ENCODE measurements at regions of chr1 and their contacts with region 1.

Region 1: DNA sequence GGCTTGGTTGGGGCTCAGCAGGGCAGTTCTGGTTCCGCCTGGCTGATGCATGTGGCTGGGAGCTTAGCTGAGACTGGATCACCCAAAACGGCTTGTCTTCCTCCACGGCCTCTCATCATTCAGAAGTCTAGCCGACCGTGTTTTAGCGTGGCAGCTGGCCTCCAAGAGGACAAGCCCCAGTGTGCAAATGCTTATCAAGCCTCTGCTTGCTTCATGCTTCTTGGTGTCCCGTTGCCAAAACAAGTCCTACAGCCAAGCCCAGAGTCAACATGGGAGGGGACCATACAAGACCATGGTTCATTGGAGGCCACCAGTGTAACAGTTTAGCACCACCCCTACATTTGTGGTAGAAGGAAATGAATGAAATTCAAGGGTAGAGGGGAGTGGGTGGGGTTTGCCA is 10.5 kb upstream of the KDF1 start:
- DNase-seq: peak in 1 of 2 experiments; percentile 44
- H3K4me3 ChIP-seq: no peak overlapping the region
- H3K27ac ChIP-seq: no peak overlapping the region
- H3K4me1 ChIP-seq: no peaks in the 10 kb centered on the region
- H3K27me3 ChIP-seq: no peaks in the 10 kb centered on the region
- CTCF ChIP-seq: no peak

Region 2: DNA sequence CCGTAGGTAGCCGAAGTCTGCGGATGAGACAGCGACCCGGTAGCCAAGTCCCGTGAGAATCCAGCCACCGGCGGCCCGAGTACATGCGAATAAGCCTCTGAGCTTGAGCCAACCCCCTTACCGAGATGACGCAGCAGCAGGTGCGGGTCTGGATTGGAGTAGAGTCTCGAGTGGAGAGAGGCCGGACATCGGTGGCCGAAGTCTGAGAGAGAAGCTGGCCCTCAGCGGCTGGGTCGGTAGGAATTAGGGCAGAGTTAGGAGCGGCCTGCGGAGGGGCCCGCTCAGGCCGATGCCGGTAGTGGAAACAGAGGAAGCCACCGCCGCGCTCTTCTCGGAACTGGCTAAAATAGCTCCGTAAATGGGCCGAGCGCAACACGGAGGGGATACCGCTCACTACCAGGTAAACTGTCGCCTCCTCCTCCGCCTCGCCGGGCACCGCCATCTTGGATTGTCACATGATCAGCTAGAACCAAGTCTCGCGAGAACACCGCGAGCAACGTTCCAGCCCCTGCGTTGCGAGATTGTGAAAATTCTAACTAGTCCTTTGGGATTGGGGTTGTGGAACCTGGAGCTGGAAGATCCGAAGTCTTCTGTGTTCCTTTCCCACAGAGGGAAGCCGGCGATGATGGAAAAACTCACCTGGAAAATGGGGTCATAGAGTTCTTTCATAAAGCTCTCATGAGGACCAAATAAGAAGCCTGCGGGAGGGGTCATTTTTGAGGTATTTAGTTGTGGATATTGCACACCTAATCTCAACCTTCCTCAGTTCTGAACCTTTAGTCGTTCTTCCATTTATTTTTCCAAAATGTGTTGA is 70.6 kb before region 1 on chr1 and contains the start of gene GPATCH3:
- CTCF ChIA-PET with region 1: no interaction called
- POLR2A ChIA-PET with region 1: no interaction called
- intact Hi-C with region 1: no loop called
- DNase-seq: peak; percentile 70 to 83
- H3K4me3 ChIP-seq: peak within 1 kb of the TSS; percentile 88
- H3K27ac ChIP-seq: peak within 1 kb of the TSS; percentile 81
- H3K4me1 ChIP-seq: peaks cover 15% of the 10 kb centered on the region; the same call in 1 of the 2 replicates
- H3K27me3 ChIP-seq: no peaks in the 10 kb centered on the region
- CTCF ChIP-seq: no peak
- total RNA-seq, gene GPATCH3: 13.1 and 16.7 TPM in 2 replicates

Region 3: DNA sequence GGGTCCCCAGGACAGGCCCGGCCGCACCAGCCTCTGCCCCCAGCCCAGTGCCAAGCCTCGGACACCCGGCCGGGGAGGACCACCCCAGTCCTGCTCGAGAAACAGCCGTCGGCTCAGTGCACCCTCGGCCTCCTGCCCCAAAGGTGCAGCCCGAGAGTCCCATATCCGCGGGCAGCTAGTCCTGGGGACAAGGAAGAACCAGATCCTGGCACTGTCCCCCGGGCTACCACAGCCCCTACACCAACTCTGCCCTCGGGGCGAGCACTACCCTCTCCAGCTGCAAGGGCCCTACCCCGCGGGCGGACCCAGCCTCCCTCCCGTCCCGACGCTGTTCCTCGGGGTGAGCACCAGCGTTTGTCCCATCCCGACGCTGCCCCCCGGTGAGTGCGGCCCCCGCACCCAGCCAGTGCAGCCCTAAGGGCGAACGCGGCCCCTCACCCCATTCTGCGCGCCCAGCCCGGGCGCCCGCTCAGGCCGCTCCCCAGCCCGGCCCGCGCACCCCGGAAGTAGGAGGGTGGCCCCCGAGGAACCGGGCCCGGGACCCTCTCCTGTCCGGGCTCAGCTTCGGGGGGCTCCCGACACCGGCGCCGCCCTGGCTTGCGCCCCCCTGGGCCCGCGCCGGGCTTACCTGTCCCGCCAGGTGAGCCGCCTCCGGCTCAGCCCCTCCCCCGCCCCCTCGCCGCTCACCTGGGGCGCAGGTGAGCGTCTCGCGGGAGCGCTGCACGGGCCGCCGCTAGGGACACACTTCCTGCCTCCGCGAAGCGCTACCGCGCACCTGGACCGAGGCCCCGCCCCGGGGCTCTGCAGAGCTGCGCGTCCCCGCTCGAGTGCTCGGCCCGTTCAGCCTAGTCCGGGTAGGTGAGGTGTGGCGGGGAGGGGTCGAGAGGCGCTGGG is 10.8 kb before region 1 on chr1 and contains the start of gene KDF1:
- CTCF ChIA-PET with region 1: interaction called, 16 read pairs
- POLR2A ChIA-PET with region 1: no interaction called
- intact Hi-C with region 1: no loop called
- DNase-seq: peak; percentile 68 to 88
- H3K4me3 ChIP-seq: peak within 1 kb of the TSS; percentile 81
- H3K27ac ChIP-seq: peak within 1 kb of the TSS; percentile 23; the same call in 1 of the 2 replicates
- H3K4me1 ChIP-seq: peaks cover 19% of the 10 kb centered on the region
- H3K27me3 ChIP-seq: no peaks in the 10 kb centered on the region
- CTCF ChIP-seq: no peak; the same call in 1 of the 2 replicates
- total RNA-seq, gene KDF1: 20.5 and 21.3 TPM in 2 replicates

Region 4: GRCh38 chr1:27071049-27071416 is 100.2 kb after region 1 on chr1:
- CTCF ChIA-PET with region 1: interaction called, 10 read pairs
- POLR2A ChIA-PET with region 1: no interaction called
- intact Hi-C with region 1: no loop called
- DNase-seq: no peak
- H3K4me3 ChIP-seq: no peak overlapping the region
- H3K27ac ChIP-seq: no peak overlapping the region
- H3K4me1 ChIP-seq: no peaks in the 10 kb centered on the region
- H3K27me3 ChIP-seq: no peaks in the 10 kb centered on the region
- CTCF ChIP-seq: no peak

Region 5: GRCh38 chr1:27849951-27850350 is 879.1 kb after region 1 on chr1:
- CTCF ChIA-PET with region 1: interaction called, 15 read pairs
- POLR2A ChIA-PET with region 1: no interaction called
- intact Hi-C with region 1: no loop called
- DNase-seq: no peak
- H3K4me3 ChIP-seq: no peak overlapping the region
- H3K27ac ChIP-seq: no peak overlapping the region
- H3K4me1 ChIP-seq: no peaks in the 10 kb centered on the region
- H3K27me3 ChIP-seq: no peaks in the 10 kb centered on the region
- CTCF ChIP-seq: no peak